GM12878 (cell line): ENCODE measurements at regions of chr19 and their contacts with region 1.

Region 1: GRCh38 chr19:11581740-11582139 is 4.3 kb upstream of the ACP5 start:
- DNase-seq: peak; percentile 96
- ATAC-seq: peak; percentile 84
- H3K4me3 ChIP-seq: 0 out of 2 replicates have a peak overlapping the region, but pooled peaks have one; percentile 31
- H3K27ac ChIP-seq: peak overlapping the region; percentile 76
- H3K4me1 ChIP-seq: peaks cover 48% of the 10 kb centered on the region
- H3K27me3 ChIP-seq: no peaks in the 10 kb centered on the region
- CTCF ChIP-seq: no peak
- EP300 ChIP-seq: peak in 1 of 2 experiments; percentile 55; a peak in 1 of 4 replicates
- POLR2A ChIP-seq: no peak
- RAD21 ChIP-seq: no peak

Region 2: DNA sequence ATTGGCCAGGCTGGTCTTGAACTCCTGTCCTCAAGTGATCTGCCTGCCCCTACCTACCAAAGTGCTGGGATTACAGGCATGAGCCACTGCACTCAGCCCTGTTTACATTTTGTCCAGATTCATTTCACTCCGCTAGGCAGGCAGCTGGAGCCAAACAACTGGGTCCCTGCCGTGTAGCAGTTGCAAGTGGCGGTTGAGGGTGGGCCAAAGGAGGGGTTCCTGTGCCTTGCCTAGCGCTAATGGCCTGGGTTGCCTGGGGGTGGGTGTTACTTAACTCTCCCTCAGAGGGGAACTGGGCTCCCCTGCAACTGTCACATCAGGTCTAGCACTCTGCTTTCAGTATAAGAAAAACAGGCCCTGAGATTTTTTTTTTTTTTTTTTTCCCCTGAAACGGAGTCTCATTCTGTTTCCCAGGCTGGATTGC is 11.7 kb before region 1 on chr19:
- CTCF ChIA-PET with region 1: interaction called, 47 read pairs
- POLR2A ChIA-PET with region 1: interaction called, 87 read pairs
- RAD21 ChIA-PET with region 1: interaction called, 66 read pairs
- SMC1A ChIA-PET with region 1: interaction called, 84 read pairs
- in situ Hi-C with region 1: no loop called
- intact Hi-C with region 1: no loop called
- DNase-seq: no peak
- ATAC-seq: no peak
- H3K4me3 ChIP-seq: no peak overlapping the region
- H3K27ac ChIP-seq: peak overlapping the region; percentile 42
- H3K4me1 ChIP-seq: peaks cover 33% of the 10 kb centered on the region
- H3K27me3 ChIP-seq: no peaks in the 10 kb centered on the region
- CTCF ChIP-seq: no peak
- EP300 ChIP-seq: peak in 1 of 2 experiments; percentile 45; a peak in 1 of 4 replicates
- POLR2A ChIP-seq: no peak
- RAD21 ChIP-seq: no peak